A673 (cell line): ENCODE measurements at regions of chr3 and their contacts with region 1.

Region 1: GRCh38 chr3:90184861-90185260 is 1077.4 kb downstream of the EPHA3 start:
- DNase-seq: peak; percentile 28
- H3K4me3 ChIP-seq: no peak overlapping the region
- H3K27ac ChIP-seq: no peak overlapping the region
- H3K4me1 ChIP-seq: peaks cover 19% of the 10 kb centered on the region
- H3K27me3 ChIP-seq: no peaks in the 10 kb centered on the region
- CTCF ChIP-seq: no peak

Region 2: GRCh38 chr3:89859757-89860156 is 325.1 kb before region 1 on chr3:
- CTCF ChIA-PET with region 1: no interaction called
- POLR2A ChIA-PET with region 1: no interaction called
- intact Hi-C with region 1: loop called (anchors 5 kb)
- DNase-seq: no peak
- H3K4me3 ChIP-seq: no peak overlapping the region
- H3K27ac ChIP-seq: no peak overlapping the region
- H3K4me1 ChIP-seq: no peaks in the 10 kb centered on the region
- H3K27me3 ChIP-seq: no peaks in the 10 kb centered on the region
- CTCF ChIP-seq: no peak

Region 3: DNA sequence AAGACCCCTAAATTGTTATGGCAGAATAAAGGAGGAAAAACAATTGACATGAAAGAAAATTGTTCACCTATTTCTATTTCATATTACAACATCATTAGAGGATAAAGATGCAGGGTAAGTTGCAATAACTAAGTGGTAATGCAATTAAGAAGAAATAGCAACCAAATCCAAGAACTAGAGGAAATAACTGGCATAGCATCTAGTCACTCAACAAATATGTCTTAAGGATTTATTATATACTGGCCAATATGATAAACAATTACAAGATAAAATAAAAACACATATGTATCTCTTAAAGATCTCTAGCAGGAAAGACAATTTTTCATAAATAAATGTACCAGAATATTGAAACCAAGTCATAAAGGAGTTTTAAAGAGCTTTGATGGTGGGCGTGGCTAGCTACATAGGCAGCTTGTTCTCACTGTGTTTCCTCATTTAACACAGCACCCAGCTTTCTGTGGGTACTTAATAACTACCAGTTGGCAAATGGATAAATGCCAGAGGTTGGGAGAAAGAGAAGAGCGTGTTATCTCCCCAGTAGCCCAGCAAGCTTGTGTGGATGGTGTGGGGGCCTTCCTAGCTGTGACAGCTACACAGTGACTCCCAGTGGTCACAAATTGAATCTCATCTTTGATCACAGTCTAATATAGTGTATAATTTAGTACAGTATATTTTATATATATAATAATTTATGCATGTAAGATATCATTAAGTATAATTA is 93.5 kb before region 1 on chr3:
- CTCF ChIA-PET with region 1: no interaction called
- POLR2A ChIA-PET with region 1: no interaction called
- intact Hi-C with region 1: loop called (anchors 5 kb)
- DNase-seq: peak; percentile 89
- H3K4me3 ChIP-seq: no peak overlapping the region
- H3K27ac ChIP-seq: no peak overlapping the region
- H3K4me1 ChIP-seq: peaks cover 21% of the 10 kb centered on the region
- H3K27me3 ChIP-seq: no peaks in the 10 kb centered on the region
- CTCF ChIP-seq: peak; percentile 71